AG04450 (cell line): ENCODE measurements at regions of chr10 and their contacts with region 1.

Region 1: DNA sequence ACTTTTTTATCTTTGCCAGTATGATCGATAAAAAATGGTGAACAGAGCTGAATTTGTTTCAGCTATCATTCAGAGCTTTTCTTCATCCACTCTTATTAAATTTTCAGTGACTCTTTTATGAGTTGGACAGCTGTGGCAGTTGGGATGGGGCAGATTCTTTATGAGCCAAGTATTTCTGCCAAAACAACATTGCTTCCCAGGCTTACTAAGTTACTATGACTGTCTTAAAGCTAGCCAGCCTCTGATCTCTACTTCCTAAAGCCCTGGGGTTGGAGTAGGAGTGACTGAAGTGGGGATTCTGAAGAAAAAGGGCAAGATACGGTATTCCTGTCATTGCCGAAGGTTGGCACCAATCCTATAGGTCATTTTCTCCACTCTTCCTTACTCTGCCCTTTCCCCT is 12.6 kb downstream of the RPP30 start:
- DNase-seq: no peak
- H3K4me3 ChIP-seq: no peak overlapping the region
- H3K27ac ChIP-seq: peak overlapping the region; percentile 49
- H3K27me3 ChIP-seq: no peaks in the 10 kb centered on the region
- CTCF ChIP-seq: no peak

Region 2: GRCh38 chr10:90701428-90701827 is 183.0 kb before region 1 on chr10:
- CTCF ChIA-PET with region 1: no interaction called
- POLR2A ChIA-PET with region 1: no interaction called
- DNase-seq: no peak
- H3K4me3 ChIP-seq: no peak overlapping the region
- H3K27ac ChIP-seq: no peak overlapping the region
- H3K27me3 ChIP-seq: no peaks in the 10 kb centered on the region
- CTCF ChIP-seq: no peak

Region 3: DNA sequence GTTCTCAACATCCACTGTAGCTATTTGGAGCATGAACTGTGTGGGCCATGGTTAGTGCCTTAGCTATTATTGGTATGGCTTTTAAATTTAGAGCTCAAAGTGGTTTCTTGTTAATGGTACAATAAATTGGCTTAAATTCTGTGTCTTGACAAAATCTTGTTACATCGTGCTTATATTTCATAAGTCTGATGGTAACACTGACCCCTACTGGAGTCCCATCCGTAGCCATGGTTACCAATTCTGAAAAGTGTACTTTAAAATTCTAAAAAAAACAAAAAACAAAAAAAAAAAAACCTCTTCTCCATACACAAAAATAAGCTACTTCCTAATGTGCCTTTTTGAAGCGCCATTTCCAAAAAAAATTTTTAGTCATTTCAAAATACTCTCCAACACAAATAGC is 19.0 kb before region 1 on chr10:
- CTCF ChIA-PET with region 1: interaction called, 10 read pairs
- POLR2A ChIA-PET with region 1: no interaction called
- DNase-seq: no peak
- H3K4me3 ChIP-seq: no peak overlapping the region
- H3K27ac ChIP-seq: no peak overlapping the region
- H3K27me3 ChIP-seq: peaks cover 17% of the 10 kb centered on the region
- CTCF ChIP-seq: peak; percentile 57

Region 4: DNA sequence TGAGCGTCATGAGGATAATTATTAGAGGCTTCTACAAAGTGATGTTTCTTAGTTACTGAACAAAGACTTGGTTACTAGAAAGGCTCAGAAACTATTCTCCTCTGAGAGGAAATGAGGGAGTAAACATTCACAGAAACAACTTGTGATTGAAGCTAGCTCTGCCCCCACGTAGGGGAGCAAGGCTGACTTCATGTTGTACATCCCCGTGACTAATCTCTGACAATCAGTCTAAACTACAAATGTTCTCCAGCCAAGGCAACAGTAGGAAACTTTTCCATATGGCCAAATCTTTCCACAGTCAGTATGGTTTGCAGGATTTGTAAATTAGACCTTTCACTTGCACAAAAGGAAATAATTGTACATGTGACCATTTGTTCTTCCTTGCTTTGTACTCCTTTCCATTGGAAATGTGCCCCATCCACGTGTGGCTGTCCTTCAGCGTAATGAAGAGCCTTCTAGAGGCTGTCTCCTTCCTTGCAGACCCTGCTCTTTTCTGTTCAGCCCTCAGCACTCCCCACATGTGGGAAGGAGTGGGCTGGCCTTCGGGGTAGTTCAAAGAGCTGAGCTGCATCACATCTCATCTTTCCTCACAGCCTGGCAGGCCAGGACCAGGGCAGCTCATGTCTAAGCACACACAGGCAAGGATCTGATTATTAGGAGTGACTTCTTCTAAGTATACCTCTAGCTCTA is 429.5 kb after region 1 on chr10:
- CTCF ChIA-PET with region 1: interaction called, 14 read pairs
- POLR2A ChIA-PET with region 1: no interaction called
- DNase-seq: peak; percentile 59
- H3K4me3 ChIP-seq: no peak overlapping the region; the same call in 1 of the 2 replicates
- H3K27ac ChIP-seq: peak overlapping the region; percentile 91
- H3K27me3 ChIP-seq: peaks cover under 1% of the 10 kb centered on the region
- CTCF ChIP-seq: no peak